Activated CD4-positive, alpha-beta memory T cell treated with anti-CD3 and anti-CD28 coated beads, Interleukin-2, amount 10 ng/mL, durations not matched to agents 7 days and 5 days (primary cell): ENCODE measurements at regions of chr1 and their contacts with region 1.

Region 1: GRCh38 chr1:30801771-30802198 is 44.2 kb upstream of the LAPTM5 start:
- DNase-seq: peak; percentile 79
- H3K4me3 Mint-ChIP-seq: no peak overlapping the region
- H3K27ac Mint-ChIP-seq: no peak overlapping the region
- H3K4me1 Mint-ChIP-seq: peaks cover 4% of the 10 kb centered on the region
- H3K27me3 Mint-ChIP-seq: peaks cover 45% of the 10 kb centered on the region

Region 2: DNA sequence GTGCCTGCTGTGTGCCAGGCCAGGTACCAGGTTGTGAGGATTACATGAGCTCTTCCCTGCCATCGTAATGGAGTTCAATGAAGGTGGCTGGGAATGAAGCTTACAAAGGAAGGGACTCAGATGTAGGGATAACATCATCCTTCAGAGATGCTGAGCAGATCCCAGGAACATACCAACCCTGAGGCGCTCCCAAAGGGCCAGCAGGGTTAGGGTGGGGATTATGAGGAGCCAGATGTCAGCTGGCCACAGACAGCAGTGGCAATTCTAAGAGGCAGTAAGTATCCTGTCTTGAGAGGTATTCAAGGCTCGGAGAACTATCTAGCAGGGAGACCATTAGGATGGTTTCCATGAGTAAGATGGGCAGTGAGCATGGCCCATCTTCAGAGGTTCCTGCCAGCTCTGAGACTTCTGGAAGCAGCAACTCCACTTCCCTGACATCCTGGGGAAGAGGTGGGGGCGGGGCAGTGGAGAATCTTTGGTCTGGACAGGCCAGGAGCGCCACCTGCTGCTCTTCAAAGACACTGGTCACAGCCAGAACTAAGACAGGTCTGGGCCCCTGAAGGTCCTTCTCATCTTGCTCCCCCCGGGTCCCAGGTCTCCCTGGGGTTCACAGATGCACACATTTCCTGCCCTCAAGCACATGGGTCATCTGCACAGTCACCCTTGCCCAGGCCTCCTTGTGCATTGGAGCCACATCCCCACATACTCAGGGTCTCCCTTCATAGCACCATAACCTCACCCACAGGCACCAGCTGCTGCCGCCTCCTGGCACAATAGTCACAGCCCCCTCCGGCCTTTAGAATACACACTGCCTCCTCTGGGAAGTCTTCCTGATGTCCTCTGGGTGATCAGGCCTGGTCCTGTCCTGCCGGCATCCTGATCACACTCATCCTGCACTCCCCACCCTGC is 109.5 kb after region 1 on chr1:
- CTCF ChIA-PET with region 1: interaction called, 110 read pairs
- POLR2A ChIA-PET with region 1: interaction called, 7 read pairs
- DNase-seq: peak; percentile 62
- H3K4me3 Mint-ChIP-seq: no peak overlapping the region
- H3K27ac Mint-ChIP-seq: no peak overlapping the region
- H3K4me1 Mint-ChIP-seq: peaks cover 19% of the 10 kb centered on the region
- H3K27me3 Mint-ChIP-seq: peaks cover 34% of the 10 kb centered on the region

Region 3: GRCh38 chr1:30929135-30929889 is 127.5 kb after region 1 on chr1:
- CTCF ChIA-PET with region 1: interaction called, 37 read pairs
- POLR2A ChIA-PET with region 1: no interaction called
- DNase-seq: peak; percentile 57
- H3K4me3 Mint-ChIP-seq: no peak overlapping the region
- H3K27ac Mint-ChIP-seq: no peak overlapping the region
- H3K4me1 Mint-ChIP-seq: peaks cover 2% of the 10 kb centered on the region
- H3K27me3 Mint-ChIP-seq: no peaks in the 10 kb centered on the region